ENCODE measurements at regions of chr14 and their contacts with region 1.

Region 1: GRCh38 chr14:50003213-50004031 is 110.5 kb downstream of the ARF6 start:
- DNase-seq: peak; percentile 85
- ATAC-seq: peak; percentile 65
- H3K4me3 Mint-ChIP-seq: peak overlapping the region; percentile 83
- H3K27ac Mint-ChIP-seq: peak overlapping the region; percentile 95
- H3K4me1 Mint-ChIP-seq: peaks cover 79% of the 10 kb centered on the region
- H3K27me3 Mint-ChIP-seq: no peaks in the 10 kb centered on the region
- CTCF ChIP-seq: no peak

Region 2: DNA sequence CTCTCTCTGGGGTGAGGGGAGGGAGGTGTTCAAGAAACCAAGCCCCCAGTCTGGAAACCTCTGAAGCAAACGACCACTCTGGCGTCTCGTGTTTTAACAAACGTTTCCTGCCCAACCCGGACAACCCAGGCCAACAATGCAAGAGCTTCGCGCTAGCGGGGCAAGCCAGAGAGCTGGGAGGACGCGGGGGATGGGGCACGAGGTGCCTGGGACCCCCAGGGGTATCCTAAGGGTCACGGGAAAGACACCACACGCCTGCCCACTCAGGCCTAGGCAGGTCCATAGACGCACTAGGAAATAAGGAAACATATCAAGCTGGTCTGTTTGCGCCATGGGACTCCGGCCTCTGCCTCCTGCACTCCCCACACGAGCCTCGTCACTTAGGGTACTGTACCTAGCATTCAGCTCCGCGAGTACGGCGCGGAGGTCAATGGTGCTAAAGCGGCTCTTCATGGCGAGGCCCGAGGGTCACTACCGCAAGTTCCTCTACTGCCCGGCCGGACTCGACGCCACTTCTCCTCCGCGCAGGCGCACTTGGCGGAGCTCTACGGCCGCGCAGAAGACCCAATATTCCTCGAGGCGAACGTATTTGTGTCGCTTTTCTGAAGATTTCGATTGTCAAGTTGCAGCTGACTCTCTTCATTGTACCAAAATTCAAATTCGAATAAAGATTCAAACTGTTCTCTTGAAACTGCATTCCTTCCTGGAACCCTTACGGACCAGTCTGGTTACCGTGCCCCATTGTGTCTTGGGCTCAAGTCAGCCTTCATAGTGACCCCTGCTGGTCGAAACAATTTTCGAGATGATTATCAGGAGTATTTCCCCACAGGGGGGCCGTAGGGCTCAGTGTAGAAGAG is 150.9 kb before region 1 on chr14 and contains the start of gene NEMF:
- CTCF ChIA-PET with region 1: interaction called, 10 read pairs
- POLR2A ChIA-PET with region 1: interaction called, 19 read pairs
- intact Hi-C with region 1: loop called (anchors 1 kb)
- DNase-seq: peak; percentile 78
- ATAC-seq: peak; percentile 83
- H3K4me3 Mint-ChIP-seq: peak within 1 kb of the TSS; percentile 99
- H3K27ac Mint-ChIP-seq: peak within 1 kb of the TSS; percentile 98
- H3K4me1 Mint-ChIP-seq: peaks cover 47% of the 10 kb centered on the region
- H3K27me3 Mint-ChIP-seq: no peaks in the 10 kb centered on the region
- CTCF ChIP-seq: peak; percentile 27
- total RNA-seq, gene NEMF: 99.1 and 110 TPM in 2 replicates

Region 3: GRCh38 chr14:49892636-49893308 is 110.7 kb before region 1 on chr14 and contains the start of gene ARF6:
- CTCF ChIA-PET with region 1: interaction called, 10 read pairs
- POLR2A ChIA-PET with region 1: interaction called, 143 read pairs
- intact Hi-C with region 1: loop called (anchors 1 kb)
- DNase-seq: peak; percentile 98
- ATAC-seq: peak; percentile 85
- H3K4me3 Mint-ChIP-seq: peak within 1 kb of the TSS; percentile 96
- H3K27ac Mint-ChIP-seq: peak within 1 kb of the TSS; percentile 98
- H3K4me1 Mint-ChIP-seq: peaks cover 38% of the 10 kb centered on the region
- H3K27me3 Mint-ChIP-seq: no peaks in the 10 kb centered on the region
- CTCF ChIP-seq: no peak
- total RNA-seq, gene ARF6: 136 and 142 TPM in 2 replicates

Region 4: DNA sequence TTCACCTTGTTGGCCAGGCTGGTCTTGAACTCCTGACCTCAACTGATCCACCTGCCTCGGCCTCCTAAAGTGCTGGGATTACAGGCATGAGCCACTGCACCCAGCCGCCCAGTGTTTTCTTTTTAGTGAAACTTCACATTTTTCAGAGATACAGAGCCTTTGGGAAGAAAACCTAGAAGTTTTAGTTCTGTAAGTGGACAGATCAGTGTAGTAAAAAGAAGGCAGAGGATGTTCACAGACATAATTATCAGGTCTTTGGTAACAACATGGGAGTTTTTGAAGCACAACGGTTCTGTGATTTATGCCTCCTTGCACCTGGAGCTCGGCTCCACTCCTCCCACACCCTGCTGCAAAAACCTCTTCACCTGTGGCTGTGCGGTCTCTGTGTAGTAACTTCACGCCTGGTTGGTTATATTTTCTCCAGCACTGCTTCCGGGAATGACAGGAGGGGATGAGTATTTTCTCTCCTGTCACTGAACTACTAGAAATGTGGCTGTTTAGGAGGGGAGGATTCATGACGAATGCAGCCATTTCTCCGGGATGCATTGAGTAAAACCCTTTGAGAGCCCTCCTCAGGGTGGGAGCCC is 43.5 kb before region 1 on chr14:
- CTCF ChIA-PET with region 1: interaction called, 7 read pairs
- POLR2A ChIA-PET with region 1: interaction called, 42 read pairs
- intact Hi-C with region 1: loop called (anchors 1 kb)
- DNase-seq: no peak
- ATAC-seq: peak; percentile 59
- H3K4me3 Mint-ChIP-seq: peak overlapping the region; percentile 71
- H3K27ac Mint-ChIP-seq: peak overlapping the region; percentile 96
- H3K4me1 Mint-ChIP-seq: peaks cover 67% of the 10 kb centered on the region
- H3K27me3 Mint-ChIP-seq: no peaks in the 10 kb centered on the region
- CTCF ChIP-seq: no peak

Region 5: DNA sequence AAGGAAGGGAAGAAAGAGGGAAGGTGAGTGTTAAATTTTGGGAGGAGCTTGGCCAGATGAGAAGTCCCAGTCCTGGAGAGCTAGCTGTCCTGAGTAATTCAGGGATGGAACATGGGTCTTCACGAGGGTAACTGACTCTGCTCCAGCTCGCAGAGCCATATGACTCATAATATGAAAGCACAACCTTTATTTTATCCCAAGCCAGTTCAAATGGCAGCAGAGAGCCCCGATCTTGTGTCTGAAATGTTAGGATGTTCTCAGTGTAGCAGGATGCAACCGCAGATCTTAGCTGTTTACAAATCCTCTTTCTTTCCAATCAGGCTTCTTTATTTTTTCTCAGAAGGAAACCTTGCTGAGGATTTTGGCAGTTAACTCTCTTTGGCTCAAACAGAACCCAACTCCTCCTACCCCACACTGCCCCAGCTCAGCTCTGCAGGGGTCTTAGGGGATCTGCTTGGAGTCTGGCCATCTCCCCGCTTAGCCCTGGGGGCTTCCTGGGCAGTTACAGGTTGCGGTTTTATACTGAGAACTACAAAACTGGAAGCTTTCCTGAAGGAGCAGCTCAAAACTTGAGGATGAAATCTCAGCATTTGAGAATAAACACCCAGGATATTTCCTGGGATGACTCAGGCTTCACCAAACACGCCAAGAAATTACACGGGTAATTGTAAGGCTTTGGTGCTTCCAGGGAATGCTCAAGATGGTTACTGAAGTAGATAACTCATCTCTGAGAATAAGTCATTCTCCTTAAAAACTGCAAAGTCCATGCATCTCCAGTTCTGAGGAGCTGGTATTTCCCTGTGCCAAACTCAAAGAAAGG is 20.5 kb after region 1 on chr14:
- CTCF ChIA-PET with region 1: no interaction called
- POLR2A ChIA-PET with region 1: interaction called, 5 read pairs
- intact Hi-C with region 1: loop called (anchors 2 kb)
- DNase-seq: no peak
- ATAC-seq: no peak
- H3K4me3 Mint-ChIP-seq: no peak overlapping the region
- H3K27ac Mint-ChIP-seq: no peak overlapping the region
- H3K4me1 Mint-ChIP-seq: peaks cover 18% of the 10 kb centered on the region
- H3K27me3 Mint-ChIP-seq: no peaks in the 10 kb centered on the region
- CTCF ChIP-seq: no peak

Region 6: DNA sequence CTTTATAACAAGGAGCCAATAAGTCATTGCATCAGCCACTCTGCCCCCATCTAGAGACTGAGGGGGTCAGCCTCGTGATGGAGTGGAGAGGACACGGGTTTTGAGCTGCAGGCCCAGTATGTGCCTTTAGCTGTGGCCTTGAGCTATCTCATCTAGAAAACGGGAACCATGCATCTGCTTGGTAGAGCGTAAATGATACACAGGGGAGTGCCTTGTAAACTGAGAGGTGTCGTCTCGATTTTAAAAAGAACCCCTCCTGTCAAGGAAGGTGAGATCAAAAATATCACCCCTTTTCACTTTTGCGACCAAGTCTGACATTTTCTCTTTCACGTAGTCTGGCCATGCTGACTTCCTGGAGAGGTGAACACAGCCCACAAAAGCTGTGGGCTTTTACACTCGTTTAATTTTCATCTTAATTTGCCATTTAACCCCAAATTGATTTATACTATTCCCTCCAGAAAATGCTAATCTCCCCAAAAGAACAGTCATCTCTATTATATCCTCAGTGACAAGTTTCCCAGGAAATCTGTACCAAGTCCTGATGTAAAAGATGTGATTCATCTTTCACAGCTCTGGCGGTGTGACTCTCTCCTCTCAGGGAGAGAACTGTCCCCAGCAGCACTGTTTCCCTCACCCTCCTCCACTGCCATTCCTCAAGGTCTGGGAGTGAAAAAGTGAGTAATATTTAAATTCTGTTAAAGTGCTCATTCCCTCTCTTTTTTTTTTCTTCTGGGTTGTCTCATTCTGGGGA is 82.3 kb after region 1 on chr14:
- CTCF ChIA-PET with region 1: interaction called, 8 read pairs
- POLR2A ChIA-PET with region 1: interaction called, 40 read pairs
- intact Hi-C with region 1: loop called (anchors 1 kb)
- DNase-seq: peak; percentile 44
- ATAC-seq: peak; percentile 75
- H3K4me3 Mint-ChIP-seq: peak overlapping the region; percentile 68
- H3K27ac Mint-ChIP-seq: peak overlapping the region; percentile 97
- H3K4me1 Mint-ChIP-seq: peaks cover 92% of the 10 kb centered on the region
- H3K27me3 Mint-ChIP-seq: no peaks in the 10 kb centered on the region
- CTCF ChIP-seq: no peak

Region 7: DNA sequence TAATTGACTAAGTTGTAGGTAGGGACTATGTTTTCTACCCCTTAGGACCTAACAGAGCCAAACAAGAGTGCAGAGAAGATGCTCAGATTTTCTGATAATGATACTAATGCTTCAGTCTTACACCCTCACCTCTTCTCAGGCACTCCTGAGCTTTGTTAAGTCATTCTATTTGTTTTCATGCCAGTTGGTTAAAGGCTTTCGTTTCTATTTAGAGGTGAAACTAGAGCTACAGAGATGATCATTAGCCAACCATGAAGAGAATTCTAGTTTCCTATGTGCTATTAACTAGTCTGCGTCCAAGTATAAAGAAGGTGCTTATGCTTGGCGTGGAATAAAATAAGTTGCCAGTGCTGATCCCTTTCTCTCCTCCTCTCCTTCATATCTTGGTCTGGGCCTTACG is 975.5 kb after region 1 on chr14:
- CTCF ChIA-PET with region 1: no interaction called
- POLR2A ChIA-PET with region 1: no interaction called
- intact Hi-C with region 1: no loop called
- DNase-seq: no peak
- ATAC-seq: peak; percentile 49
- H3K4me3 Mint-ChIP-seq: no peak overlapping the region
- H3K27ac Mint-ChIP-seq: no peak overlapping the region
- H3K4me1 Mint-ChIP-seq: peaks cover 19% of the 10 kb centered on the region
- H3K27me3 Mint-ChIP-seq: peaks cover 4% of the 10 kb centered on the region
- CTCF ChIP-seq: no peak